CD4-positive, alpha-beta T cell (primary cell): ENCODE measurements at regions of chr2 and their contacts with region 1.

Region 1: GRCh38 chr2:29841386-29842004 is 79.9 kb downstream of the ALK start:
- DNase-seq: peak in 6 of 14 experiments; percentile 0 to 34 (median 14)
- ATAC-seq: no peak
- H3K4me3 ChIP-seq: no peak overlapping the region
- H3K4me3 Mint-ChIP-seq: no peak overlapping the region
- H3K27ac ChIP-seq: no peak overlapping the region
- H3K27ac Mint-ChIP-seq: no peak overlapping the region
- H3K4me1 ChIP-seq: no peaks in the 10 kb centered on the region
- H3K4me1 Mint-ChIP-seq: no peaks in the 10 kb centered on the region
- H3K27me3 ChIP-seq: peaks cover 4 to 5% of the 10 kb centered on the region in 2 experiments
- H3K27me3 Mint-ChIP-seq: peaks cover 18% of the 10 kb centered on the region
- CTCF ChIP-seq: peak; percentile 72

Region 2: DNA sequence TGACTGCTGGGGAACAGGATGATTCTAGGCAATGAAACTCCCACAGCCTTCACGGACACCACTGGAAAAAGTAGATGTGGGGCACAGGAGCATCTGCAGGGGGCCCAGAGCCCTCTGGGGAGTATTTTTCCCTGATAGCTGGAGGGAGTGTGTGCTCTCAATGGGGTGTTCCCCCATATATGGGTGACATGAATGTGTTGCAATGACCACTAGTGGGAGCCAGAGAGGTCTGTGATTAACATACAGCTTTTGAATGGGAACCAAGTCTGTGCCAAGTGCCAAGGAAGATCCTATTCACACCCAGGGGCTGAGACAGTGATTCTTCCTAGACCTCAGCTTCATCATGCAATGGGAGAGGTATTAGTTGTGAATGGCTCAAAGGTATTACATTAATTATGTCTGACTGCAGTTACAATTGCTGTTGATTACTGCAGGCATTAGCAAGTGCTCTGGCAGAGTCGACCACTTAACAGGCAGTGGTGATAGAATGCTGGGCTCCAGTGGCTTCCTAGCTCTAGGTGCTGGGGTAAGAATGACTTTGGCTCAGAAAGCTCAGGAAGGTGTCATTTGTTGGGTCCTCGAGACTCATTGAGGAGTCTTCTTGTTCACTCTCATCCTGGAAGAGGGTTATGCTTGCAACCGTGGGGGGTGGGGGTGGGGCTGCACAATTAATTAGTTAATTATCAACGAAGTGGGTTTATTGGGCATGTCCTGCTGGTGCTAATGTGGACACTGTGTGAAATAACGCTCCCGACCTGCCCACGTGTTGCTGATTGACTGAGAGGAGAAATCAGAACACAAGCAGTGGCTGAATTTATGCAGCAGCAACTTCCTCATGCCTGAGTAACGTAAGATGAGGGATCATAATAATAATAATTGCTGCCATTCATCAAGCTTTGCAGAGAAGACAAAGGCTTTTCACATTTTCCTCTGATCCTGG is 532.1 kb before region 1 on chr2:
- CTCF ChIA-PET with region 1: no interaction called
- POLR2A ChIA-PET with region 1: interaction called, 3 read pairs
- intact Hi-C with region 1: loop called in 1 of 2 experiments (anchors 2 kb)
- DNase-seq: peak in 10 of 14 experiments; percentile 6 to 71 (median 19)
- ATAC-seq: peak; percentile 70
- H3K4me3 ChIP-seq: no peak overlapping the region
- H3K4me3 Mint-ChIP-seq: no peak overlapping the region
- H3K27ac ChIP-seq: no peak overlapping the region
- H3K27ac Mint-ChIP-seq: no peak overlapping the region
- H3K4me1 ChIP-seq: peaks cover 6% of the 10 kb centered on the region
- H3K4me1 Mint-ChIP-seq: peaks cover 3% of the 10 kb centered on the region
- H3K27me3 ChIP-seq: peaks cover 0 to 3% of the 10 kb centered on the region in 2 experiments
- H3K27me3 Mint-ChIP-seq: peaks cover 33% of the 10 kb centered on the region
- CTCF ChIP-seq: peak; percentile 74

Region 3: GRCh38 chr2:29742656-29743055 is 98.8 kb before region 1 on chr2:
- CTCF ChIA-PET with region 1: no interaction called
- POLR2A ChIA-PET with region 1: no interaction called
- intact Hi-C with region 1: no loop called
- DNase-seq: no peak
- ATAC-seq: no peak
- H3K4me3 ChIP-seq: no peak overlapping the region
- H3K4me3 Mint-ChIP-seq: no peak overlapping the region
- H3K27ac ChIP-seq: no peak overlapping the region
- H3K27ac Mint-ChIP-seq: no peak overlapping the region
- H3K4me1 ChIP-seq: no peaks in the 10 kb centered on the region
- H3K4me1 Mint-ChIP-seq: no peaks in the 10 kb centered on the region
- H3K27me3 ChIP-seq: peaks cover 0 to 4% of the 10 kb centered on the region in 2 experiments
- H3K27me3 Mint-ChIP-seq: peaks cover 4% of the 10 kb centered on the region
- CTCF ChIP-seq: no peak

Region 4: GRCh38 chr2:29940706-29941105 is 99.2 kb after region 1 on chr2:
- CTCF ChIA-PET with region 1: no interaction called
- POLR2A ChIA-PET with region 1: no interaction called
- intact Hi-C with region 1: no loop called
- DNase-seq: no peak
- ATAC-seq: no peak
- H3K4me3 ChIP-seq: no peak overlapping the region
- H3K4me3 Mint-ChIP-seq: no peak overlapping the region
- H3K27ac ChIP-seq: no peak overlapping the region
- H3K27ac Mint-ChIP-seq: no peak overlapping the region
- H3K4me1 ChIP-seq: no peaks in the 10 kb centered on the region
- H3K4me1 Mint-ChIP-seq: no peaks in the 10 kb centered on the region
- H3K27me3 ChIP-seq: no peaks in the 10 kb centered on the region
- H3K27me3 Mint-ChIP-seq: peaks cover under 1% of the 10 kb centered on the region
- CTCF ChIP-seq: no peak